Naive thymus-derived CD4-positive, alpha-beta T cell (primary cell): ENCODE measurements at regions of chr1 and their contacts with region 1.

Region 1: GRCh38 chr1:30801771-30802198 is 44.2 kb upstream of the LAPTM5 start:
- DNase-seq: peak; percentile 47 to 85 (median 70)
- ATAC-seq: peak; percentile 85
- H3K4me3 ChIP-seq: no peak overlapping the region
- H3K4me3 Mint-ChIP-seq: peak overlapping the region in 4 of 10 donors; percentile 25 to 66 (median 42)
- H3K27ac ChIP-seq: no peak overlapping the region
- H3K27ac Mint-ChIP-seq: peak overlapping the region in 1 of 9 donors; percentile 69
- H3K4me1 ChIP-seq: no peaks in the 10 kb centered on the region
- H3K4me1 Mint-ChIP-seq: peaks cover 0 to 9% (median 4%) of the 10 kb centered on the region in 7 donors
- H3K27me3 ChIP-seq: peaks cover 0 to 5% of the 10 kb centered on the region in 2 donors
- H3K27me3 Mint-ChIP-seq: peaks cover 25 to 48% (median 29%) of the 10 kb centered on the region in 5 donors

Region 2: DNA sequence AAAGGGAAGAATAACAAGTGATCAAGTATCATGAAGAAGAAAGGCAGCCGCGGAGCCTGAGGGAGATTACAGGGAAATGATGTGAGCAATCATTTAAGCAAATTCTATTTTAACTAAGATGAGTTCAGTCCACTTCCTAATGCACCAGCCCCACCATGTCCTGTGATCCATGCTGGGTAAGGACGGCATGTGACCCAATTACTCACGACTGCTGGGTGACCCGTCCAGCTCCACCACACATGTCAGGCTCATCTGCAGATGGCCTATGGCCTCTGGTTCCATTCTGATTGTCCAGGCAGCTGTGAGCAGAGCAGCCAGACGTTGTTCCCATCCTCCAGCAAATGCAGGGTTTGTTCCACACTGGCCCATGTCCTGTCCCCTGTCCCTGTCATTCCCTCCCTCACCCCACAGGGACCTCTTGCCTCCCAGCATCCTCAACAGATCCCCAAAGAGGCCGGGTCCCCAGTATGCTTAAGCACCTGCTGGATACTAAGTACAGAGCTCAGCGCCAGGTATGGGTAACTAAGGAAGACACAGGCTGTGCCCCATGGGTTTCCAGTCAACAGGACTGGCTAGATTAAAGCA is 166.3 kb before region 1 on chr1:
- CTCF ChIA-PET with region 1: no interaction called
- POLR2A ChIA-PET with region 1: no interaction called
- intact Hi-C with region 1: no loop called
- DNase-seq: no peak
- ATAC-seq: no peak
- H3K4me3 ChIP-seq: no peak overlapping the region
- H3K4me3 Mint-ChIP-seq: no peak overlapping the region
- H3K27ac ChIP-seq: no peak overlapping the region
- H3K27ac Mint-ChIP-seq: no peak overlapping the region
- H3K4me1 ChIP-seq: no peaks in the 10 kb centered on the region
- H3K4me1 Mint-ChIP-seq: no peaks in the 10 kb centered on the region
- H3K27me3 ChIP-seq: no peaks in the 10 kb centered on the region
- H3K27me3 Mint-ChIP-seq: peaks cover 0 to 16% (median 6%) of the 10 kb centered on the region in 5 donors

Region 3: DNA sequence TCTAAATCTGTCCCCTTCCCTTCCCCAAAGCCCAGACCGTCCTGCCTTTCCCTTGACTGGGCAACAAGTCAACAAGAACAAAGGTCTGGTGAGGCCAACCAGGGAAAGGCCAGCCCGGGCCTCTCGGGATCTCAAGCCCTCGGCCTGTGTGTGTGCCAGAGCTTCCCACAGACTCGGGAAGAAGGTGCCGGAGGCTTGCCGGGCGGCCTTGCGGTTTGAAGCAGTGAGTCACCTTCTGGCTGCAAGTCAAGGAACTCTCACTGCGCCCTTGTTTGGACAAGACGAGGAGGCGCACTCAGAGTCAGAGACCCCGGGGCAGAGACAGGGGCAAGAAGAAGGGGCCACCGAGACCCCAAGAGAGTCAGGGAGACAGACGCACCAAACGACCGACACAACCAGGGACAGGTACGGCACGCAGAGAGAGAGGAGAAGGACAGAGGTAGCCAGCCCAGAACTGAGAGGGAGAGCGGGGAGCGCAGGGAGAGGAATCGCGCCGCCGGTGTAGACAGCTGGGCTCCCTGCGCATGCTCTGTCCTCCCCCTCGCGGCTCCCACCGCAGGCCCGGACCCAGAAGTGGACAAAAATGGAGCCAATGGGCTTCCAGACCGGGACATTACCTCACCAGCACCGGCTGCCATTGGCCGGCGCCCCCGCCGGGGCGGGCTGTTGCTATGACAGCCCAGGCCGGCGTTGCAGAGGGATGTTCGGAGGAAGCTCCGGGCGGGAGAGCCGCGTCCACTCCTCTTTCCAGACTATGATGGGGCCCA is 22.4 kb after region 1 on chr1:
- CTCF ChIA-PET with region 1: no interaction called
- POLR2A ChIA-PET with region 1: no interaction called
- intact Hi-C with region 1: no loop called
- DNase-seq: peak in 6 of 9 donors; percentile 2 to 66 (median 10)
- ATAC-seq: peak; percentile 85
- H3K4me3 ChIP-seq: no peak overlapping the region
- H3K4me3 Mint-ChIP-seq: peak overlapping the region; percentile 18 to 82 (median 74)
- H3K27ac ChIP-seq: no peak overlapping the region
- H3K27ac Mint-ChIP-seq: peak overlapping the region in 2 of 9 donors; percentile 21 to 69
- H3K4me1 ChIP-seq: peaks cover 0 to 10% of the 10 kb centered on the region in 2 donors
- H3K4me1 Mint-ChIP-seq: peaks cover 9 to 24% (median 15%) of the 10 kb centered on the region in 7 donors
- H3K27me3 ChIP-seq: peaks cover 9 to 13% of the 10 kb centered on the region in 2 donors
- H3K27me3 Mint-ChIP-seq: peaks cover 61 to 75% (median 63%) of the 10 kb centered on the region in 5 donors

Region 4: DNA sequence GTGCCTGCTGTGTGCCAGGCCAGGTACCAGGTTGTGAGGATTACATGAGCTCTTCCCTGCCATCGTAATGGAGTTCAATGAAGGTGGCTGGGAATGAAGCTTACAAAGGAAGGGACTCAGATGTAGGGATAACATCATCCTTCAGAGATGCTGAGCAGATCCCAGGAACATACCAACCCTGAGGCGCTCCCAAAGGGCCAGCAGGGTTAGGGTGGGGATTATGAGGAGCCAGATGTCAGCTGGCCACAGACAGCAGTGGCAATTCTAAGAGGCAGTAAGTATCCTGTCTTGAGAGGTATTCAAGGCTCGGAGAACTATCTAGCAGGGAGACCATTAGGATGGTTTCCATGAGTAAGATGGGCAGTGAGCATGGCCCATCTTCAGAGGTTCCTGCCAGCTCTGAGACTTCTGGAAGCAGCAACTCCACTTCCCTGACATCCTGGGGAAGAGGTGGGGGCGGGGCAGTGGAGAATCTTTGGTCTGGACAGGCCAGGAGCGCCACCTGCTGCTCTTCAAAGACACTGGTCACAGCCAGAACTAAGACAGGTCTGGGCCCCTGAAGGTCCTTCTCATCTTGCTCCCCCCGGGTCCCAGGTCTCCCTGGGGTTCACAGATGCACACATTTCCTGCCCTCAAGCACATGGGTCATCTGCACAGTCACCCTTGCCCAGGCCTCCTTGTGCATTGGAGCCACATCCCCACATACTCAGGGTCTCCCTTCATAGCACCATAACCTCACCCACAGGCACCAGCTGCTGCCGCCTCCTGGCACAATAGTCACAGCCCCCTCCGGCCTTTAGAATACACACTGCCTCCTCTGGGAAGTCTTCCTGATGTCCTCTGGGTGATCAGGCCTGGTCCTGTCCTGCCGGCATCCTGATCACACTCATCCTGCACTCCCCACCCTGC is 109.5 kb after region 1 on chr1:
- CTCF ChIA-PET with region 1: interaction called, 16 read pairs
- POLR2A ChIA-PET with region 1: interaction called, 4 read pairs
- intact Hi-C with region 1: loop called (anchors 1 kb)
- DNase-seq: peak in 2 of 9 donors; percentile 12 to 54
- ATAC-seq: peak; percentile 60
- H3K4me3 ChIP-seq: no peak overlapping the region
- H3K4me3 Mint-ChIP-seq: no peak overlapping the region
- H3K27ac ChIP-seq: no peak overlapping the region
- H3K27ac Mint-ChIP-seq: peak overlapping the region in 1 of 9 donors; percentile 66
- H3K4me1 ChIP-seq: peaks cover 0 to 6% of the 10 kb centered on the region in 2 donors
- H3K4me1 Mint-ChIP-seq: peaks cover 9 to 18% (median 15%) of the 10 kb centered on the region in 7 donors
- H3K27me3 ChIP-seq: peaks cover 0 to 4% of the 10 kb centered on the region in 2 donors
- H3K27me3 Mint-ChIP-seq: peaks cover 17 to 38% (median 19%) of the 10 kb centered on the region in 5 donors

Region 5: DNA sequence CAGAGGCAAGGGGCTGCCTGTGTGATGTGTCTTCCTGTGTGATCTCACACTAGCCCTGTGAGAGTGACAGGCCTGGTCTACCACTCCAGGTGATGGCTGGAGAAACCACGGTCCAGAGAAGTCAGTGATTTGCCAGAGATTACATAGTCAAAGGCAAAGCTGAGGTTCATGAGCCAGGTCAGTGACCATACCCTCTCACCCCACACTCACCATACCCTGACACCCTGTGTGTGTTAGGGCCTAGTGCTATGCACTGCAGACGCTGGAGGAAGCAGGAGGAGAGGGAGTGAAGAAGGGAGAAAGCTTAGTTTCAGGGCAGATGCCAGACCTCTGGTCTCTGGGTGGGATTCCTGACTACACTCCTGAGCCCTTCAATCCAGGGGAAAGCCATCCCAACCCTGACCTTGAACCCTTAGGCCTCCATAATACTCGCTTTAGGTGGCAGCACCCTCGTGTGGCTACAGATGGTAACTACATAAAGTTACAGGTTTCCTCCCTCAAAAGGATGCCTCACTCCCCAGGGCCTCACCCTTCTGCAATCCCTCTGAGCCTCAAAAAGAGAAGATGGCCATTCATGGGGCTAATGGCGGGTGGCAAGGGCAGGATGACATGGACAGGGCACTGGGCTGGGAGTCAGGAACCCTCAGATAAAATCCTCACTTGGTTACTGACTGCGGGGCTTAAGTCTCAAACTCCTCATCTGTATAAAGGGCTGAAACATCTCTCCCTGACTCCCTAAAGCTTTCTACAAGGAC is 127.5 kb after region 1 on chr1:
- CTCF ChIA-PET with region 1: interaction called, 16 read pairs
- POLR2A ChIA-PET with region 1: no interaction called
- intact Hi-C with region 1: loop called (anchors 1 kb)
- DNase-seq: peak in 7 of 9 donors; percentile 24 to 53 (median 41)
- ATAC-seq: peak; percentile 82
- H3K4me3 ChIP-seq: no peak overlapping the region
- H3K4me3 Mint-ChIP-seq: no peak overlapping the region
- H3K27ac ChIP-seq: no peak overlapping the region
- H3K27ac Mint-ChIP-seq: peak overlapping the region in 7 of 9 donors; percentile 20 to 71 (median 48)
- H3K4me1 ChIP-seq: peaks cover 0 to 11% of the 10 kb centered on the region in 2 donors
- H3K4me1 Mint-ChIP-seq: peaks cover 0 to 6% (median 0%) of the 10 kb centered on the region in 7 donors
- H3K27me3 ChIP-seq: no peaks in the 10 kb centered on the region
- H3K27me3 Mint-ChIP-seq: no peaks in the 10 kb centered on the region

Region 6: GRCh38 chr1:31335007-31335406 is 533.2 kb after region 1 on chr1:
- CTCF ChIA-PET with region 1: no interaction called
- POLR2A ChIA-PET with region 1: no interaction called
- intact Hi-C with region 1: loop called in 1 of 2 experiments (anchors 1 kb)
- DNase-seq: peak in 5 of 9 donors; percentile 4 to 22 (median 7)
- ATAC-seq: no peak
- H3K4me3 ChIP-seq: no peak overlapping the region
- H3K4me3 Mint-ChIP-seq: no peak overlapping the region
- H3K27ac ChIP-seq: no peak overlapping the region
- H3K27ac Mint-ChIP-seq: no peak overlapping the region
- H3K4me1 ChIP-seq: no peaks in the 10 kb centered on the region
- H3K4me1 Mint-ChIP-seq: peaks cover 0 to 7% (median 4%) of the 10 kb centered on the region in 7 donors
- H3K27me3 ChIP-seq: no peaks in the 10 kb centered on the region
- H3K27me3 Mint-ChIP-seq: no peaks in the 10 kb centered on the region

Region 7: DNA sequence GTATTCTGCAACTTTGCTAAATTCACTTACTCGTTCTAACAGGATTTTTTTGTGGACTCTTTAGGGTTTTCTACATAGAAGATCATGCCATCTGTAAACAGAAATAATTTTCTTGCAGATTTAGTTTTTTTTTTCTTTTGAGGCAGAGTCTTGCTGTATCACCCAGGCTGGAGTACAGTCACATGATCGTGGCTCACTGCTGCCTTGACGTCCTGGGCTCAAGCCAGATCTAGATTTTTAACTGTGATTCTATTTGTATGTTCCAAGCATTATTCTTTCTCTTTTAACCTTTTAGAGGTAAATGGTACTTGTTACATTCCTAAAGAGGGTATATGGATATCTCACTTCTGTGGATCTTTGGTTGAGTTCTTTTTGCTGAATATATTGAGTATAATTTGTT is 552.5 kb after region 1 on chr1:
- CTCF ChIA-PET with region 1: no interaction called
- POLR2A ChIA-PET with region 1: no interaction called
- intact Hi-C with region 1: no loop called
- DNase-seq: no peak
- ATAC-seq: no peak
- H3K4me3 ChIP-seq: no peak overlapping the region
- H3K4me3 Mint-ChIP-seq: no peak overlapping the region
- H3K27ac ChIP-seq: no peak overlapping the region
- H3K27ac Mint-ChIP-seq: no peak overlapping the region
- H3K4me1 ChIP-seq: no peaks in the 10 kb centered on the region
- H3K4me1 Mint-ChIP-seq: peaks cover 0 to 3% (median 0%) of the 10 kb centered on the region in 7 donors
- H3K27me3 ChIP-seq: no peaks in the 10 kb centered on the region
- H3K27me3 Mint-ChIP-seq: no peaks in the 10 kb centered on the region

Region 8: GRCh38 chr1:31422505-31423319 is 620.9 kb after region 1 on chr1:
- CTCF ChIA-PET with region 1: no interaction called
- POLR2A ChIA-PET with region 1: no interaction called
- intact Hi-C with region 1: loop called in 1 of 2 experiments (anchors 1 kb)
- DNase-seq: peak; percentile 12 to 68 (median 41)
- ATAC-seq: peak; percentile 83
- H3K4me3 ChIP-seq: no peak overlapping the region
- H3K4me3 Mint-ChIP-seq: no peak overlapping the region
- H3K27ac ChIP-seq: no peak overlapping the region
- H3K27ac Mint-ChIP-seq: peak overlapping the region in 1 of 9 donors; percentile 53
- H3K4me1 ChIP-seq: no peaks in the 10 kb centered on the region
- H3K4me1 Mint-ChIP-seq: peaks cover 0 to 5% (median 2%) of the 10 kb centered on the region in 7 donors
- H3K27me3 ChIP-seq: no peaks in the 10 kb centered on the region
- H3K27me3 Mint-ChIP-seq: peaks cover 18 to 40% (median 25%) of the 10 kb centered on the region in 5 donors